ENCODE measurements at regions of chrX and their contacts with region 1.

Region 1: GRCh38 chrX:96843566-96843965 is 40.1 kb upstream of the RPA4 start:
- DNase-seq: no peak
- ATAC-seq: peak in 3 of 4 donors; percentile 41 to 60 (median 56)
- H3K4me3 ChIP-seq: no peak overlapping the region
- H3K27ac ChIP-seq: no peak overlapping the region
- H3K4me1 ChIP-seq: no peaks in the 10 kb centered on the region
- H3K27me3 ChIP-seq: peaks cover 0 to 8% (median 0%) of the 10 kb centered on the region in 9 donors
- CTCF ChIP-seq: peak in 7 of 12 donors; percentile 5 to 36 (median 33)
- POLR2A ChIP-seq: no peak

Region 2: DNA sequence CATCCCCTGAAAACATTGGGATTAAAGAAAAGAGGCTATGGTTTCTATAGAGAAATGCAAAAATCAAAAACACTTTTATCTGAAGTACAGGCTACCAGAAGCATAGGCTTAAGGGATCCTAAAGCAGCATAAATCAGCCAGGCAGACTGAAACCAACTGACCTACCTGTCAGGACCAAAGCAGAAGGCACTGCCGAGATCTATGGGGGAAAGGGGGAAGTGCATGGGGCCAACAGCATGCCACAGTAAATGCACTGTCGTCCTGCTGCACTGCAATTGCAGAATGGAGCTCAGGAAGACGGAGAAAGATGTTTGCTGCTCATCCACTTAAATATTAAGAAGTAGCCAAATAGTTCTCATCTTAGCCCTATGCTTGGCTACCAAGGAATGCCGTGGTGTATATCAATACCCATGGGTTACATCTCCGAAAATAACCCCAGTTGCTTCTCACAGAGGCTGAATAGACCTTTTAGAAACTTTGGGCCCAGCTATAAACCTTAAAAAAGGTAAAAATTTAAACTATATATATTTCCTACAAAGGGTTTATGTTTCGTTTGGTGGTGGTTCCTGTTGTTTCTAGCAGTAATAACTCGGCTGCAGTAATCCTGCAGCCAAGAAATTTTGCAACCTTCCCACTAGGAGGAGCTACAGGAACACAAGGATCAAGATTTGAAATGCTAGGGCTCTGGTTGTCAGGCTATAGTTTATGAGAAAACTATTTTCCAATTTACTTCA is 471.1 kb before region 1 on chrX:
- intact Hi-C with region 1: loop called in 1 of 10 experiments (anchors 10 kb)
- DNase-seq: peak in 1 of 5 donors; percentile 5
- ATAC-seq: peak in 3 of 4 donors; percentile 27 to 64 (median 51)
- H3K4me3 ChIP-seq: peak overlapping the region in 3 of 12 donors; percentile 16 to 29 (median 24)
- H3K27ac ChIP-seq: no peak overlapping the region
- H3K4me1 ChIP-seq: no peaks in the 10 kb centered on the region
- H3K27me3 ChIP-seq: no peaks in the 10 kb centered on the region
- CTCF ChIP-seq: peak; percentile 46 to 72 (median 62)
- POLR2A ChIP-seq: no peak

Region 3: DNA sequence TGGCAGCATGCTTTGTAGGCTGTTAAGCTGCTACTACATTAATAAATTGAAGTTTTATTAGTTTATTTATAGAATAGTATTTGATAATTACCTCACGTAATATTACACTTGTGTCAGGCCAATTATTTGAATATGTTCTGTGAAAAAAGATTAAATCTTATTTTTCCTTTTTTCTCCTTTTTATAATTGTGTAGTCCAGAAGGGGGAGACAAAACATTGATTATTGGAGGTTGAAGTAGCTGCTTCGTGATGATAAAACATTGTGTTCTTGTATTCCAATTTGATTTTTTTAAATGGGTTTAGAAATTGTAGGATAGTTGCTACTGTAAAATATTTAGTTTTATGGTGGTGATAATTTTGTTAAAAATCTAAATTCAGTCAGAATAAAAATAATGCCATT is 73.3 kb before region 1 on chrX:
- intact Hi-C with region 1: loop called in 1 of 10 experiments (anchors 5 kb)
- DNase-seq: no peak
- ATAC-seq: no peak
- H3K4me3 ChIP-seq: no peak overlapping the region
- H3K27ac ChIP-seq: no peak overlapping the region
- H3K4me1 ChIP-seq: peaks cover 0 to 11% (median 0%) of the 10 kb centered on the region in 12 donors
- H3K27me3 ChIP-seq: peaks cover 0 to 3% (median 0%) of the 10 kb centered on the region in 9 donors
- CTCF ChIP-seq: peak in 11 of 12 donors; percentile 10 to 55 (median 40)
- POLR2A ChIP-seq: no peak